ENCODE measurements at regions of chr12 and their contacts with region 1.

Region 1: DNA sequence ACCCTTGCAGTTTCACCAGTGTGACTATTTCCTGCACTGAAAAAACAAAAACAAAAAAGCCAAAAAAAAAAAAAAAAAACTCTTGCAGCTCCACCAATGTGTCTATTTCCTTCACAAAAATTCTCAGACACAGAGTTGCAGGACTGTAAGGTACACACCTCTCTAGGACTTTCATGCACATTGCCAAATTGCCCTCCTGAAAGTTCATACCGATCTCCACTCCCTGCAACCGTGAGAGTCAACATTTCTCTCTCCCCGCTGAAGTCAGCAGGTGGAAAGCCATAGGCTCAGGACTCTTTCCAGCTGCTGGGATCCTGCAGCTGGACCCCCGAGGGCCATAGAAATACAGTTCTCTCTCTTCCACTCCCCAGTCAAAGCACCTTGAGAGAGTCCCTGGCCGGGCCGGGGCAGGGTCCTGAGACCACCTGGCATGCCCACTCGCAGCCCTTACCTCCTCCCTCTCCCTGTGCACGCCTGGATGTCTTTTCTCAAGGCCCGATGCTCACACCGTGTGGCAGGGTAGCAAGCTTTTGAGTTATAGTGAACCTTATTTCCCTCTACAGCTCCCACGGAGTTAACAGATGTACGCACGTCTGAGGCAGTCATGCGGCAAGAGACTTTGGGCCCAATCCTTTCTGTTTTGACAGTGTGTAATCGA is 23.6 kb downstream of the MMAB start:
- DNase-seq: no peak

Region 2: GRCh38 chr12:109597795-109598427 is 48.2 kb after region 1 on chr12:
- intact Hi-C with region 1: loop called in 1 of 2 experiments (anchors 2 kb)
- DNase-seq: peak; percentile 95